K562 (cell line): ENCODE measurements at regions of chr3 and their contacts with region 1.

Region 1: GRCh38 chr3:193350744-193351143 is 27.8 kb downstream of the ATP13A5 start:
- DNase-seq: no peak
- ATAC-seq: no peak
- H3K4me3 ChIP-seq: no peak overlapping the region
- H3K27ac ChIP-seq: no peak overlapping the region
- H3K4me1 ChIP-seq: no peaks in the 10 kb centered on the region
- H3K27me3 ChIP-seq: no peaks in the 10 kb centered on the region; a peak in 1 of 5 replicates
- CTCF ChIP-seq: no peak
- EP300 ChIP-seq: no peak
- POLR2A ChIP-seq: no peak
- RAD21 ChIP-seq: no peak

Region 2: GRCh38 chr3:193446965-193447602 is 96.3 kb after region 1 on chr3:
- CTCF ChIA-PET with region 1: no interaction called
- POLR2A ChIA-PET with region 1: no interaction called
- in situ Hi-C with region 1: no loop called
- intact Hi-C with region 1: loop called (anchors 5 kb)
- DNase-seq: no peak
- ATAC-seq: no peak
- H3K4me3 ChIP-seq: no peak overlapping the region
- H3K27ac ChIP-seq: no peak overlapping the region
- H3K4me1 ChIP-seq: no peaks in the 10 kb centered on the region
- H3K27me3 ChIP-seq: no peaks in the 10 kb centered on the region; a peak in 1 of 5 replicates
- CTCF ChIP-seq: no peak
- EP300 ChIP-seq: no peak
- POLR2A ChIP-seq: no peak
- RAD21 ChIP-seq: no peak

Region 3: GRCh38 chr3:193522473-193522872 is 171.7 kb after region 1 on chr3:
- CTCF ChIA-PET with region 1: no interaction called
- POLR2A ChIA-PET with region 1: no interaction called
- in situ Hi-C with region 1: no loop called
- intact Hi-C with region 1: no loop called
- DNase-seq: no peak
- ATAC-seq: no peak
- H3K4me3 ChIP-seq: no peak overlapping the region
- H3K27ac ChIP-seq: no peak overlapping the region
- H3K4me1 ChIP-seq: no peaks in the 10 kb centered on the region
- H3K27me3 ChIP-seq: no peaks in the 10 kb centered on the region; a peak in 1 of 5 replicates
- CTCF ChIP-seq: no peak
- EP300 ChIP-seq: no peak
- POLR2A ChIP-seq: no peak
- RAD21 ChIP-seq: no peak